ENCODE measurements at regions of chr12 and their contacts with region 1.

Region 1: DNA sequence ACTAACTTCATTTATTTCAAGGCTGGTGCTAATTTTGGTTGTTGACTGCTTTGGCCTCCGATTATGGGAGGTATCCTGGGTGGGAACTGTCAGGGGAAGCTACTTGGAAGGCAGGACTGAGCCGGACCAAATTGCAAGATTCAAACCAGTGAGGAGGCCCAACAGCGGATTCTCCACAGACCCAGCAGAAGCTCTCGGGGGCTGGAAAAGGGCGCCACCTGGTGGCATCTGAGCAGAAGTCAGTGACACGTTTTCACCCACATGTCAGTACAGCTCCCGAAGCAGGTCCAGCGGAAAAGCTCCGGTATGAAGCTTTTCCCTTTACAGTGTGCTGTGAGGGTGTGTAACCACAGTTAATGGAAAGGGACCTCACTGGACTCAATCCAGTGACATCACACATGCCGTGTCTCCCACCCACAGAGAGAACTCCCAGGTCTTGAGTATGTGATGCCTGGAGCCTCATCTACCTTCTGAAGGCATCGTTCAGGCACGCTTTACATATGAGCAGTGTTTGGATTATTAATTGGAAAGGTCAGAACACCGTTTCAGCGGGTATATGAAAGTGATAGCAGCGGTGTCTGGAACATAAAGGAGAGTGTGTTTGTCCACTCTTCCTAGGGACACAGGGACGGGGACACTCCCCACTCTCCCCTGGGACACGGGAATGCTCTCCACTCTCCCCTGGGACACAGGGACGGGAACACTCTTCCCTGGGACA is 3.6 kb upstream of the P2RX2 start:
- DNase-seq: peak in 1 of 2 donors; percentile 86
- H3K4me3 ChIP-seq: no peak overlapping the region
- H3K27ac ChIP-seq: no peak overlapping the region
- H3K4me1 ChIP-seq: peaks cover 3 to 4% of the 10 kb centered on the region in 2 donors
- H3K27me3 ChIP-seq: peaks cover 26% of the 10 kb centered on the region
- CTCF ChIP-seq: peak; percentile 82 to 87 (median 84)

Region 2: DNA sequence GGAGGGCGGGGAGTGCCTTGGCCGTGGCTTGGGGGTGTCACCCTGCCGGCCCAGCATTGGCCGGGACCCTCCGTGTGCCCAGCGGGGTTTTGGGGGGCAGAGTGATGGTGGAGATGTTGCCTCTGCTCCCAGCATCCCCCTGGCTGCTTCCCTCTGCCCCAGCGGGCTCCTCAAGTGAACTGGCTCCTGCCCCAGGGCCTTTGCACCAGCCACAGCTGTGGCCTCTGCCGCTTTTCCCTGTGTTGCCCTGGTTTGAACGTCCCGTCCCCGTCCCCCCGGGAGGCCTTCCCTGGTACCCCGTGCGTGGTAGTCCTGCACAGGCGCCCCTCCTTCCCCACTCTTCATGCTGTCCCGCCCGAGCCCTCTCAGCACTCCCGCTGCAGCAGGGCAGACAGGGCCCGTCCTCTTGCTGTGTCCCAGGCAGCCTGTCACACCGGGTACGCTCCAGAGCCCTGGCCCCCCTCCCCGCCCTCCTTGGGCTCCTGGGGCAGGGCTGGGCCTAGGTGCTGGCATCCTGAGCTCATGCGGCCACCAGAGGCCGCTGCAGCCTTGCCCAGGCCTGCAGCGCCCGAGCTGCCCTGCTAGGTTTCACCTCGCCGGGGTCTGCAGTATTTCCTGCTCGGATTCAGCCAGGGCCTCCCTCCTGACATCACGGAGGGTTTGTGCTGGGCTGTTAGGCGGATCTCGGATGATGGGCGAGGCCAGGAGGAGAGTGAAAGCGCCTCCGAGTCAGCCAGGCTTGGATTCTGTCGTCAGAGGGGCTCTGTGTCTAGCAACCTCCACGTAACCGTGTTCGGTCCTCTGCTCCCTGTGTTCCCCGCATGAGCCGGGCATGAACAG is 461.3 kb before region 1 on chr12:
- intact Hi-C with region 1: loop called (anchors 2 kb)
- DNase-seq: peak in 1 of 2 donors; percentile 78
- H3K4me3 ChIP-seq: peak overlapping the region; percentile 22 to 55
- H3K27ac ChIP-seq: no peak overlapping the region
- H3K4me1 ChIP-seq: no peaks in the 10 kb centered on the region
- H3K27me3 ChIP-seq: no peaks in the 10 kb centered on the region
- CTCF ChIP-seq: peak; percentile 85 to 98 (median 86)

Region 3: DNA sequence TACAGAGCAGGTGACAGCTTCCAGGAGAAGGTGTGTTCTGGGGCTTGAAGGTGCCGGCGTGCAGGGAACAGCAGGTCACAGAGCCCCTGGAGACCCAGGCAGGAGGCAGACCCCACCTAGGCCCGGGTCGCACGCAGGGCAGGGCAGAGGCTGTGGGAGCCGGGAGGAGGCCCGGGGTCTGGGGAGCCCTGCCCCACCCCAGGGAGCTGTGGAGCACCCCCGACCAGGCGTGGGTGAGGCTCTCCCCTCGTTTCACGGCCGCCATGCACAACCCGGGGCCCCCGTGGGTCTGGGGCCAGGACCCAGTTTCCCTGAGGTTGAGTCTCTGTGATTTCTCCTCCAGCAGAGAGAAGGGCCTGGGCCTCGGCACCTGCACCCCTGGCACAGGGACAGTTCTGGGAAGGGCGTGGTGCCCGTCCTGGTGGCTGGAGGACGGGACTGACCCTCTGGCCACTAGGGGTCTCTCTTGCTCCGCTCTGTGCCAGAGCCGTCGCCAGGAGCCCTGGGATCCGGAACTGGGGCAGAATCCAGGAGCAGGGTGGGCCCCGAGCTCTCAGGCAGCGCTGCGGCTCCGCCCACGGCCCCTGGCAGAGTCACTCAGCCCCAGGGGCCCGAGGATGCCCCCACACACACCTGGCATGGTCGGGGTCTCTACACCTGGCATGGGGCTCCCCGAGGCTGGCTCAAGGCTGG is 200.2 kb before region 1 on chr12:
- intact Hi-C with region 1: loop called (anchors 1 kb)
- DNase-seq: no peak
- H3K4me3 ChIP-seq: no peak overlapping the region
- H3K27ac ChIP-seq: no peak overlapping the region
- H3K4me1 ChIP-seq: no peaks in the 10 kb centered on the region
- H3K27me3 ChIP-seq: no peaks in the 10 kb centered on the region
- CTCF ChIP-seq: peak; percentile 69 to 80 (median 70)

Region 4: GRCh38 chr12:132700212-132700822 is 85.3 kb after region 1 on chr12:
- intact Hi-C with region 1: no loop called
- DNase-seq: no peak
- H3K4me3 ChIP-seq: no peak overlapping the region
- H3K27ac ChIP-seq: no peak overlapping the region
- H3K4me1 ChIP-seq: no peaks in the 10 kb centered on the region
- H3K27me3 ChIP-seq: no peaks in the 10 kb centered on the region
- CTCF ChIP-seq: no peak

Region 5: DNA sequence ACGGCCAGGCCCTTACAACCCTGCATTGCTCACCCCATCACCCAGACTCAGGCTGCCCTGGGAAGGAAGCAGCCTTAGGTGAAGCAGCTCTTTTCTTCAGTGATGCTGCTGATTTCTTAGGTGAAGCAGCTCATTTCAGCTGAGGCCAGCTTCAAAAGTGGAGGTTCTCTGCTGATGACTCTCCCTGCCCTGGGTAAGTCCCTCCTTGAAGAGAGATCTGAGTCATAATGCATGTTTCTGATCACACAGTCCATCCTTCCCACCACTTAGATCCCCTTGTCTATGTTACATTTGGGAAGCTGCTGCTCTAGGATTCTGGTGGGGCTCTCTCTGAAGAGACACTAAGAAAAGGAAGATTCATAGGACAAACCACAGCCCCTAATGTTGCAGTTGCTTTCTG is 448.5 kb after region 1 on chr12:
- intact Hi-C with region 1: no loop called
- DNase-seq: no peak
- H3K4me3 ChIP-seq: no peak overlapping the region
- H3K27ac ChIP-seq: no peak overlapping the region
- H3K4me1 ChIP-seq: no peaks in the 10 kb centered on the region
- H3K27me3 ChIP-seq: no peaks in the 10 kb centered on the region
- CTCF ChIP-seq: no peak